ENCODE measurements at regions of chr15 and their contacts with region 1.

Region 1: DNA sequence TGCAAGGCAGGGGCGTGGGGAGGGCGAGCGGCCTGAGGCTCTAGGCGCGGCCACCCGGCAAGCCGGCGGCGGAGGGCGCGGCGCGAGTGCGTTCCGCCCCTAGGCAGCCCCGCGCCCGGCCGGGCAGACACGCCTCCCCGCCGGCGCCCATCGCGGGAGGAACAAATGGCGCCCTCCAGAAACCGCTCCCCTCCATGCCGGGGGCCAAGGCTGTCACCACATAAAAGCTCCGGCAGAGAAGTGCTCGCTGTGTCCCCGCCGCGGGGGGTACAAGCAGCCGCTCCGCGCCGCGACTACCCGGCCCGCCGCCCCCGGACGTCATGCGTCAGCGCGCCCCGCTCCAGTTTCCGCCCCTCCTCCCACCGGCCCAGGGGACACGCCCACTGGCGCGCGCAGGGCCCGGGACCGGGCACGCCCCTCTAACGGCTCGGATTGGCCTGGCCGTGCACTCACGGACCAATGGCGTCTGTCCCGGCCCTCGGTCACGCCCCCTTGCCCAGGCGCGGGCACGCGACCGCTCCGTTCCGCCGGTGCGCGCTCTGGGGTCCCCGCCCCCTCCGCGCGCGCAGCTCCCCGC is 391 bp upstream of the KLF13 start:
- DNase-seq: peak; percentile 100
- ATAC-seq: peak; percentile 77
- H3K4me3 Mint-ChIP-seq: peak overlapping the region; percentile 94
- H3K27ac Mint-ChIP-seq: peak overlapping the region; percentile 72
- H3K4me1 Mint-ChIP-seq: peaks cover 43% of the 10 kb centered on the region
- H3K27me3 Mint-ChIP-seq: no peaks in the 10 kb centered on the region

Region 2: GRCh38 chr15:31215490-31216214 is 110.6 kb before region 1 on chr15:
- POLR2A ChIA-PET with region 1: interaction called, 41 read pairs
- DNase-seq: peak; percentile 92
- ATAC-seq: peak; percentile 74
- H3K4me3 Mint-ChIP-seq: peak overlapping the region; percentile 72
- H3K27ac Mint-ChIP-seq: peak overlapping the region; percentile 96
- H3K4me1 Mint-ChIP-seq: peaks cover 29% of the 10 kb centered on the region
- H3K27me3 Mint-ChIP-seq: peaks cover 3% of the 10 kb centered on the region

Region 3: DNA sequence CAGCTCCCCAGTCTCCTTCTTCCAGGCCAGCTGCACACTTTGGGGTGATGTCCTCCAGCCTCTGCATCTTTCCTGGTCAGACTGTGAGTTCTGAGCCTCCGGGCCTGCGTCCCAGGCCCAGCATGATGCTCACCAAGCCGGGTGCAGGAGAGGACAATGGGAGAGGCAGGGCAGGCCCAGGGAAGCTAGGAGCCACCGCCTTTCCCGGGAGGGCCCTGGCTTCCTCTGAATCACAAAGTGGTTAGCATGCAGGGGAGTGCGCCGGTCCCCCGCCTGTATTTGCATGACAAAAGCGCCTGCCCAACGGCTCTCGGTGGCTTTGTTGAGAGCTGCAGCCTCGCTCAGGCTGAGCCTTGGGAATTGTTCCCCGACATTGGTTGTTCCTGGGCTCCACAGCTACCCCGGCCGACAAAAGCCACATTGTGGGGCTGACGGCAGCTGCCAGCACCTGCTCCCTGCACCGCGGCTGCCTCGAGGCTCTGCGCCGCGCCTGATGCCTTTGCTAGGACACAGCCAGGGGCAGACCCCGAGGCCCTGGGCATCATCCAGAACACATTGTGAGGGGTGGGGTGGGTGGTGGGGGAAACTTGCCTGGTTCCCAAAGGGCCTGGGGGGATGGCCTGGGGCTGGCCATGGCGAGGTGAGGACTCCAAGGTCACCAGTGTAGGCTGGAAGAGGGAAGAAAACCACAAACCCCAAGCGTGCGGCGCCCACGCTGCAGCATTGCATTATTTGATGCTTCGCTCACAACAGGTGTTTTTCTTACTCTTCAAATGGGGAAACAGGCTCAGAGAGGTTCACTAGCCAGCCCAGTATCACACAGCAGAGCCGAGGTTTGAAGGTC is 19.6 kb before region 1 on chr15:
- POLR2A ChIA-PET with region 1: interaction called, 30 read pairs
- DNase-seq: no peak
- ATAC-seq: no peak
- H3K4me3 Mint-ChIP-seq: no peak overlapping the region
- H3K27ac Mint-ChIP-seq: no peak overlapping the region
- H3K4me1 Mint-ChIP-seq: peaks cover 32% of the 10 kb centered on the region
- H3K27me3 Mint-ChIP-seq: peaks cover 19% of the 10 kb centered on the region

Region 4: DNA sequence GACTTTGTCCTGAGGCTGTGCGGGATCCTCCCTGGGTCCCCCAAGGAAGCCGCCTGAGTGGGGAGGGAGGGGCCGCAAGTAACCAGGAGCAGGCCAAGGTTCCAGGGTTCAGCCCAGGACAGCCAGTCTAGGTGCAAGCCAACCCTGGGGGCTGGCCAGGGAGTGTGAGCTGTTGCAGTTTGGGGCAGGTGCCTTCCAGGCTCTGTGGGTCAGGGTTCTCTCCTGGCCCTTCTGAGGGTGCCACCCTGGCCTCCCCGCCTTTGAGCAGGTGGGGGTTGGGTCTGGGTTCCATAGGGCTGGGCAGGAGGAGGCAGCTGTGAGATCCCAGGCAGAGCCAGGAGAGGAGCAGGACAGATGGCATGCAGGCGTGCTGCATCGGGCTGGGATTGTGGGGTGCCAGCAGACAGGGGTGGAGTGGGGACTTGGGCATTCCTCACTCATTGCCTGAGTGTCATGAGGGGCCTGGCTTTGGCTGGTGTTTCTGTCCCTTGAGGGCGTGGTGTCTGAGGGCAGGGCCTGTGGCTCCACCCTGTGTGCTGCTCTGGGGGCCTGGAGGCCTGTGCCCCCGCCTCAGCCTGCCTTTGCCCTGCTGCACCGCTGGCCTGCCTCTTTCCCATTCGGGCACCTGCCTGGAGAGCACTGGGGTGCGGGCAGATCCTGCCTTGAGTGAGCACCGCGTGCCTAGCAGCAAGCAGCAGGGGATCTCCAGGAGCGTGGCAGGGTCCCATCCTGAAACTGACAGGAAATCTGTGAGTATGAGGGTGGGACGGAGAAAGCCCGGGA is 18.8 kb after region 1 on chr15:
- POLR2A ChIA-PET with region 1: interaction called, 126 read pairs
- DNase-seq: peak; percentile 65
- ATAC-seq: peak; percentile 32
- H3K4me3 Mint-ChIP-seq: peak overlapping the region; percentile 95
- H3K27ac Mint-ChIP-seq: peak overlapping the region; percentile 100
- H3K4me1 Mint-ChIP-seq: peaks cover 85% of the 10 kb centered on the region
- H3K27me3 Mint-ChIP-seq: no peaks in the 10 kb centered on the region

Region 5: DNA sequence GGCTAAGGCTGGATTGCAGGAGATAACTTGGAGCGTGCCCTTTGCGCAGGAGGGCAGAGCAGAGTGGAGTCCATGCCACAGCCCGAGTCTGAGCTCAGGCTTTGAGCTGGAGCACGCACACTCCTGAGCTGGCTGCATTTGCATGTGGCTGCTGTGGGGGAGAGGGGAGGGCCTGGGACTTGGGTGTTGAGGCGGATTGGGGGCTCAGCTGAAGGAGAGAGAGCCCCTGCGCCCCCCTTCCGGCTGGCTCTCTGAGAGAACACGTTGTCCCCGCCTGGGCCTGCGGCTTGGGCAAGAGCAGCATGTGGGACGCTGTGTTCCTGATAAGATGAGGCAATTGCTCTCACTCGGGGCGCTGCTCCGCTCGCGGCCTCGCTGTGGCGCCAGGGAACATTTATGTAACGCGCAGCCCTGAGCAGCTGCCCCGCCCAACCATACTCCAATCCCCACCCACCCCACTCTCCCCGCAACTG is 39.4 kb after region 1 on chr15:
- POLR2A ChIA-PET with region 1: interaction called, 119 read pairs
- DNase-seq: peak; percentile 84
- ATAC-seq: peak; percentile 57
- H3K4me3 Mint-ChIP-seq: peak overlapping the region; percentile 84
- H3K27ac Mint-ChIP-seq: peak overlapping the region; percentile 100
- H3K4me1 Mint-ChIP-seq: peaks cover 93% of the 10 kb centered on the region
- H3K27me3 Mint-ChIP-seq: no peaks in the 10 kb centered on the region